ENCODE measurements at regions of chr14 and their contacts with region 1.

Region 1: DNA sequence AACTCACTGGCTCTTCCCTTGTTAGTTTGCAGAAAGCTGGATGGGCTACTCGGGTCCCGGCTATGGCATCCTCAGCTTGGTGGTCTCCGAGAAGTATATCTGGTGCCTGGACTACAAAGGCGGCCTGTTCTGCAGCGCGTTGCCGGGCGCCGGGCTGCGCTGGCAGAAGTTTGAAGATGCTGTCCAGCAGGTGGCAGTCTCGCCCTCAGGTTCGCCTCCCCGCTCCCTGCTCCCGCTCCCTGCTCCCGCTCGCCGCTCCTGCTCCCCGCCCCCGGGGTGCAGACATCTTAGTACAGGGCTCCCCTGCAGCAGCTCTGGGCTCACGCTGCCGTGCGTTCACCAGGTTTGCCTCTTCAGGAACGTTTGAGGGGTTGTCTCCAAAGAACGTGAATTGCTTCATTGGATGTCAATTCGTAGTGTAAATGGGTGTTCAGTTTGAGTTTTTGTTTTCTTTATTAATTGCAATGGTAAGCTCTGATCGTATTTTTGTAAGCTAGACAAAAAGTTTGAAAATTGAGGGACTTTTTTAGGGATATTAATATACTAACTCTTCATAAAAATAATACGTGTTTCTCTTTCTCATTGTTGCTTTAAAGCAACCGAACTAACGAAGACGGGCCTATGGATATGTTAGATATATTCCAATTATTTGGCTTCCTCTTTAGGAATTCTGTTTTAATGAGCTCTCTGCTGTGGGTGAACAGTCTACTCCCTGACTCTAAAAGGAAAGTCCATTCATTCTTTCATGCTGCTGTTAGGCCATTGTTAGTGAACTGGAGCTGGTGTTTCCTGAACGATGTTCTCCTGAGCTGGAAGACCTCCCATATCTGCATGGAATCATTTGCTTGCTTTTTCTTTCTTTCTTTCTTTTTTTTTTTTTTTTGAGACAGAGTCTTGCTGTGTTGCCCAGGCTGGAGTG is 71.3 kb downstream of the ANKRD9 start:
- DNase-seq: peak; percentile 69
- ATAC-seq: peak; percentile 80
- H3K4me3 Mint-ChIP-seq: no peak overlapping the region
- H3K27ac Mint-ChIP-seq: no peak overlapping the region
- H3K4me1 Mint-ChIP-seq: peaks cover 4% of the 10 kb centered on the region
- H3K27me3 Mint-ChIP-seq: no peaks in the 10 kb centered on the region

Region 2: DNA sequence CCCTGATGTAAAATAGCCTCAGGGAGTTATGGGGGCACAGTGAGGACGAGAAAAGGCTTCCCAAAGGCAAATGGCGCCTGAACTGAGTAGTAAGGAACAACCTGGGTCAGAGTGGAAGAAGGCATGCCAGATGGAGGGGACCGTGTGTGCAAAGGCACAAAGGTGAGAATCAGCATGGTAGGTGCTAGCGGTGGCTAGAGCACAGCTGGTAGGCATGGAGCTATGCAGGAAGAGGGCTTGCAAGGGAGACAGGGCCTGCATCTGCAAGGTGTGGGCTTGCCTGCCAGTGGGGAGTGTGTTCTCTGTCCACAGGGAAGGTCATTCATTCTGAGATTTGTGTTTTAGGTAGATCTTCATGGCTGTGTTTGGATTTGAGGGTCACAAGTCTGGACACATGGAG is 332.9 kb before region 1 on chr14:
- CTCF ChIA-PET with region 1: no interaction called
- POLR2A ChIA-PET with region 1: no interaction called
- DNase-seq: no peak
- ATAC-seq: no peak
- H3K4me3 Mint-ChIP-seq: no peak overlapping the region
- H3K27ac Mint-ChIP-seq: no peak overlapping the region
- H3K4me1 Mint-ChIP-seq: no peaks in the 10 kb centered on the region
- H3K27me3 Mint-ChIP-seq: peaks cover 4% of the 10 kb centered on the region

Region 3: DNA sequence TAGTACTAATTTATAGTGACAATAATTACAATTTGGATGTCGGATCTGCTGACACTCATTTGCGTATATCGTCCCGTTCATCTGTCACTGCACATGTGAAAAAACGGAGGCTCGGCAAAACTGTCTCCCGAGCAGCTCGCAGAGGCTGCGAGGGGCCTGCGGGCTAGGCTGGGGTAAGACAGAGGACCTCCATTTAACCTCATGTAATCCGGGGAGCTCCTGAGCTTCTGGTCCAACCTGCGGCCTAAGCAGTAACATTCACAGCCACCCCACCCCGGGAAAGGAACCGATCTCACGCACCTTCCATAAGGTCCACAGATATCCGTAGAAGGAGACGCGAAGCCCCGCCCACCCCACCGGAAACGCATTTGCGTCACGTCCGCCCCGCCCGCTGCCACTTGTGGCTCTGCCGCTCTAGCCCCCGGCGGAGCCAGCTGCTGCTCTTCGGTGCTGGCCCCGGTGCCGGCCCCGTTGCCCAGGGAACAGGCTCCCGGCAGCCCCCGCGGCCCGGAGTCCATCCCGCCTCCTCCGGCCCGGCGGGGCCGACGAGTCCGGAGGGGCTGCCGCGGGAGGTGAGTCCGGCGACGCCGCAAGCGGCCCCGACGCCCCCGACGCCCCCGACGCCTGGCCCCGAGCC is 75.6 kb before region 1 on chr14 and contains the starts of genes CINP and TECPR2:
- CTCF ChIA-PET with region 1: no interaction called
- POLR2A ChIA-PET with region 1: no interaction called
- DNase-seq: peak; percentile 98
- ATAC-seq: peak; percentile 89
- H3K4me3 Mint-ChIP-seq: peak within 1 kb of the TSS; percentile 93
- H3K27ac Mint-ChIP-seq: peak within 1 kb of the TSS; percentile 94
- H3K4me1 Mint-ChIP-seq: peaks cover 35% of the 10 kb centered on the region
- H3K27me3 Mint-ChIP-seq: no peaks in the 10 kb centered on the region
- total RNA-seq, gene CINP: 31.1 to 33.4 TPM
- total RNA-seq, gene TECPR2: 8.0 to 9.4 TPM

Region 4: DNA sequence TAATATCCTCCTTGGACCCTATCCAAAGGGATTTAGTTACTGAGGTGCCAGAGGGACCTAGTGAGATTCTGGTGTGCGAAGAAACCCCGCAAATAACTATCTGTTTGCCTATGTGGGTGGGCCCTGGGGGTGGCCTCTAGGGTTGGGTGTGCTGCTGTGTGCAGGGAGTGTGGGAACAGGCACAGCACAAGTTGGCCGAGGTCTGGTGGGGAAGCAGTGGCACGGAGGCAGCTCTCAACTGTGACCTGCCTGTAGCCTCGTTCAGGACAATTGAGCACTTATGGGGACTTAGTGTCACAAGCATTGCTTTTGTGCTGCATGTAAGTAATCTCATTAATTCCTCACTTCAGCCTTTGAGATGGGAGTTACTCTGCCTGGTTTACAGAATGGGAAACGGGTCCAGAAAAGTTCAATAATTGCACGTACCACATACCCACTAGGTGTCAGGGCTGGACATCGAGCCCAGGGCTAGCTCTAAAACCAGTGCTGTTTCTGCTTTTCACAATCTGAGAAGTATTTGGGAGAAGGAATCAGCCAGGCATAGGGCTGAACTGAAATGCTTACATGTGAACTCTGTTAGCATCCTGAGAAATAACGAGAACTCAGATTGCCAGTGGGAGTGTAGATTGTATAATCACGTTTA is 16.7 kb before region 1 on chr14:
- CTCF ChIA-PET with region 1: interaction called, 11 read pairs
- POLR2A ChIA-PET with region 1: no interaction called
- DNase-seq: no peak
- ATAC-seq: no peak
- H3K4me3 Mint-ChIP-seq: no peak overlapping the region
- H3K27ac Mint-ChIP-seq: no peak overlapping the region
- H3K4me1 Mint-ChIP-seq: no peaks in the 10 kb centered on the region
- H3K27me3 Mint-ChIP-seq: no peaks in the 10 kb centered on the region

Region 5: GRCh38 chr14:102451061-102451350 is 12.8 kb after region 1 on chr14:
- CTCF ChIA-PET with region 1: interaction called, 16 read pairs
- POLR2A ChIA-PET with region 1: no interaction called
- DNase-seq: no peak
- ATAC-seq: no peak
- H3K4me3 Mint-ChIP-seq: no peak overlapping the region
- H3K27ac Mint-ChIP-seq: no peak overlapping the region
- H3K4me1 Mint-ChIP-seq: no peaks in the 10 kb centered on the region
- H3K27me3 Mint-ChIP-seq: no peaks in the 10 kb centered on the region

Region 6: DNA sequence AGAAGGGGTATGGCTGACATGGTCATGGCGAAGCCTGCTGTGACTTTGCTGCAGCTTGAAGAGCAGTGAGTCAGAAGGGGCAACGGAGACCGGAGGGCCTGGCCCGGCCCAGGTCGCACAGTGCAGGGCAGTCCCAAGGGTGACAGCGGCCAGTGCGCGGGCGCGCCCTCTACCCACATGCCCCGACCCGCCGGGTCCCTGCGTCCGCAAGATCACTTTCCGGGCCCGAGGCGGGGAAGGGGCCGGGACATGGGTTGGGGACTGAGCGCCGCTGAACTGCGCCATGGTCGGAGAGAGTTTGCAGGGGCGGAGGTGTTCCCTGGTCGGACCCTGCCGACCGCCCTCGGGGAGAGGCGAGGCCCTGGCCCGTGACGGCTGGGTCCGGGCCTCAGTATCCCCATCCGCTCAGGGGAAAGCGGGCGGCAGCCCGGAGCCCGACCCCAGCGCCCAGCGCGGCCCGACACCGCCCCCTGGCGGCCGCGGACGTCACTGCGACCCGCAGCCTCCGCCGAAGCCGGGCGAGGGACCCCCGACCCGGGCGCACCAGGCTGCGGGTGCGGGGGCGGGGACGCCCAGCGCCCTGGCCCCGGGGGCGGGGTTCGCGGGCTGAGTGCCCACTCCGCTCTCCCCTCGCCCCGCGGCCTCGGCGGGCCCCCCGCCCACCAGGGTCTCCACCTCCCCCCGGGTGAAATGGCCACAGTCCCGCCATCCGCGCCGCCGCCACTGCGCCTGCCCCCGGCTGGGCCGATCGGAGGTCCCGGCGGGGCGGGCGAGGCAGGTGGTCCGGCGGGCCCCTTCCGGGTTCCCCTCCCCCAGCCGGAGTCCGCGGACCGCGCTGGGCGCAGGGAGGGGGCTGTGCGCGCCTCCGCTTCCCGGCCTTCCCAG is 78.5 kb after region 1 on chr14:
- CTCF ChIA-PET with region 1: interaction called, 48 read pairs
- POLR2A ChIA-PET with region 1: no interaction called
- DNase-seq: peak; percentile 68
- ATAC-seq: peak; percentile 89
- H3K4me3 Mint-ChIP-seq: peak overlapping the region; percentile 71
- H3K27ac Mint-ChIP-seq: peak overlapping the region; percentile 74
- H3K4me1 Mint-ChIP-seq: peaks cover 7% of the 10 kb centered on the region
- H3K27me3 Mint-ChIP-seq: peaks cover 20% of the 10 kb centered on the region

Region 7: GRCh38 chr14:102524466-102525218 is 86.4 kb after region 1 on chr14:
- CTCF ChIA-PET with region 1: interaction called, 25 read pairs
- POLR2A ChIA-PET with region 1: no interaction called
- DNase-seq: peak; percentile 98
- ATAC-seq: peak; percentile 99
- H3K4me3 Mint-ChIP-seq: peak overlapping the region; percentile 84
- H3K27ac Mint-ChIP-seq: peak overlapping the region; percentile 95
- H3K4me1 Mint-ChIP-seq: peaks cover 33% of the 10 kb centered on the region
- H3K27me3 Mint-ChIP-seq: no peaks in the 10 kb centered on the region

Measured in activated CD8-positive, alpha-beta T cell treated with anti-CD3 and anti-CD28 coated beads, Interleukin-2, amount 10 ng/mL, durations not matched to agents 7 days and 5 days (primary cell).